IMR-90 (cell line): ENCODE measurements at regions of chr5 and their contacts with region 1.

Region 1: DNA sequence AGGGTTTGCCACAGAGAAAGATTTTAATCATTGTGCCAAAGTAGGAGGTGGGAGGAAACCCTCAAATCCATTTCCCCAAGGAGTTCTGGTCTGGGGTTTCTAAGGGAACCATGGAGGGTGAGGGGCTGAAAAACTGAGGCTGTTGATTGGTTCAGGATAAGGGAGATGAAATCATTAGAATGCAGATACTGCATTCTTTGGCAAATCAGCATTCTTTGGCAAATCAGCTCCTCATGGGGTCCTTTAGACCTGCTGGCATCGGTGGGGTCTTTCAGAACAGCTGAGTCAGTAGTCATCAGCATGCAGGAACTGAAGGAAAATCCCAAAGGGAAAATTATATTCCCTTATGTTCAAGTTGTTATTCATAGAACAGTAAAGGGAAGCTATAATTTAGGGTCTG is 585.5 kb downstream of the ISL1 start:
- DNase-seq: no peak
- ATAC-seq: no peak
- H3K4me3 ChIP-seq: no peak overlapping the region
- H3K27ac ChIP-seq: no peak overlapping the region
- H3K4me1 ChIP-seq: no peaks in the 10 kb centered on the region
- H3K27me3 ChIP-seq: no peaks in the 10 kb centered on the region
- CTCF ChIP-seq: no peak
- POLR2A ChIP-seq: no peak
- RAD21 ChIP-seq: no peak

Region 2: GRCh38 chr5:52007230-52007858 is 38.6 kb after region 1 on chr5:
- CTCF ChIA-PET with region 1: no interaction called
- POLR2A ChIA-PET with region 1: interaction called, 10 read pairs
- dilution Hi-C with region 1: no loop called
- in situ Hi-C with region 1: no loop called
- intact Hi-C with region 1: no loop called
- DNase-seq: peak; percentile 38
- ATAC-seq: 0 out of 2 replicates have a peak, but pooled peaks have one; percentile 42
- H3K4me3 ChIP-seq: no peak overlapping the region
- H3K27ac ChIP-seq: no peak overlapping the region
- H3K4me1 ChIP-seq: no peaks in the 10 kb centered on the region
- H3K27me3 ChIP-seq: no peaks in the 10 kb centered on the region
- CTCF ChIP-seq: peak; percentile 74
- POLR2A ChIP-seq: no peak
- RAD21 ChIP-seq: peak; percentile 77

Region 3: GRCh38 chr5:52598968-52599367 is 630.2 kb after region 1 on chr5:
- CTCF ChIA-PET with region 1: no interaction called
- POLR2A ChIA-PET with region 1: no interaction called
- dilution Hi-C with region 1: no loop called
- in situ Hi-C with region 1: no loop called
- intact Hi-C with region 1: no loop called
- DNase-seq: no peak
- ATAC-seq: no peak
- H3K4me3 ChIP-seq: no peak overlapping the region
- H3K27ac ChIP-seq: no peak overlapping the region
- H3K4me1 ChIP-seq: no peaks in the 10 kb centered on the region
- H3K27me3 ChIP-seq: peaks cover 2% of the 10 kb centered on the region; the same call in 1 of the 2 replicates
- CTCF ChIP-seq: no peak
- POLR2A ChIP-seq: no peak
- RAD21 ChIP-seq: no peak